Heart right ventricle (tissue), 16 donors: ENCODE measurements at regions of chr7 and their contacts with region 1.

Region 1: GRCh38 chr7:149028346-149029109 is at the start of gene PDIA4:
- DNase-seq: peak; percentile 99 to 100
- ATAC-seq: peak; percentile 95 to 99 (median 98)
- H3K4me3 ChIP-seq: peak within 1 kb of the TSS; percentile 63 to 92 (median 84)
- H3K27ac ChIP-seq: peak within 1 kb of the TSS; percentile 44 to 95 (median 88)
- H3K4me1 ChIP-seq: peaks cover 0 to 35% (median 22%) of the 10 kb centered on the region in 9 donors
- H3K27me3 ChIP-seq: no peaks in the 10 kb centered on the region
- CTCF ChIP-seq: peak in 6 of 9 donors; percentile 8 to 49 (median 33)
- total RNA-seq, gene PDIA4: 18.2 to 49.2 (median 24.6) TPM

Region 2: DNA sequence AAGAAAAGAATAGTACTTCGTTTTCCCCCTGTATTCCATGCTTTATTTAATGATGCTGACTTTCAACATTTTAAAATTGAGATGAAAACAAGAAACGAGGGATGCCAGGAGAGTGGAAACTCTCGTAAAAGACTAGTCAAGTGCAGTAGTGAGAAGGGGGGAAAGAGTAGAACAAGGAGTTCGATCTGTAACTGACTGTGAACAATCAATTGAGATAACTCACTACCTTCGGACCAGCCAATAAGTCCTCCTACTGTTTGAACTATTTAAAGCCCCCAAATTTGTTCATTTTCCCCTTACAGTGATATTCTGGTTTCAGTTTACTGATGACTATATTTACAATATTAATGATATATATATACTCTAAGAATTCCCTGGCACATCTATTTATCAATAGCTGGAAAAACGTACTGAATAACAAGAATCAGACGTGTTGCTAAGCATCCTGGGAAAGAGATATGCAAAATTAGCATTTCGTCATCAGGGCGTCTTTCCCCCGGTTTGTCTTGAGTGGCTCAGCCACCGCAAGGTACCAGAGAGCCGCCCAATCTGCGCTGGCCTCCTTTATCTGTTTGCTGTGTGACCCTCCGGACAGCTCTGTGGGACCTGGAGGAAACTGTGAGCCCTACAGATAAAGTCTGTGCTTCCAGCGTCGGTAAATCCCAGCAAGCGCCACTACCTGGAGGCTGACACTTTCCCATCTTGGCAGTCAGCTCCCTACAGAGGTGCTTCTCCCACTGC is 41.3 kb before region 1 on chr7:
- intact Hi-C with region 1: loop called in 4 of 10 experiments (anchors 1 to 5 kb)
- DNase-seq: peak; percentile 70 to 82
- ATAC-seq: peak; percentile 90 to 95 (median 92)
- H3K4me3 ChIP-seq: peak overlapping the region; percentile 41 to 81 (median 66)
- H3K27ac ChIP-seq: peak overlapping the region; percentile 4 to 89 (median 74)
- H3K4me1 ChIP-seq: peaks cover 2 to 39% (median 32%) of the 10 kb centered on the region in 9 donors
- H3K27me3 ChIP-seq: peaks cover 0 to 5% (median 0%) of the 10 kb centered on the region in 7 donors
- CTCF ChIP-seq: no peak